H1 (cell line): ENCODE measurements at regions of chr7 and their contacts with region 1.

Region 1: DNA sequence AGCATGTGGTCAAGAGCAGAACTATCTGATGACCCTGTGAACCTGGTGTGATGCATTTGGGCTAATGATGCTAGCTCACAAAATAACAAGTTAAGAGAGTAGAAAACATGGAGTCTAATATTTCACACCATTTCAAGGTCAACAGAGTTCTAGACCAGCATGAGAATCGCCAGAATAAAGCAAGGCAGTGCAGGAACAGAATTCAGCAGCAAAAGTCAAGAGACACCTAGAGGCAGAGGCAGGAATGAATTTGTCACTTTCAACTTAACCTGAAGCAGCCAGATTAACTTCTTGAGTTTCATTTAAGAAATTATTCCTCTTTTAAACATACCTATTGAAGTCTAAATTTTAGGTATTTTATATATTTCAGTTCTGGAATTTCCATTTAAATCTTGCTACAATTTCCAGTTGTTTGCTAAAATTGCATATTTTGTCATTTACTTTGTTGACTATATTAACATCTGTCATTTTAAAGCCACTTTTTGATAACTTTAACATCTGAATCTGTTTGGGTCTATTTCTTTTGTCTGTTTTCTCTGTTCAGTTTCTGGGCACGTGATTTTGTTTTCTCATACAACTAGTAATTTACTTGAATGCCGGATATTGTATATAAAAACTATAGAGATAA is 44.2 kb upstream of the PRSS58 start:
- DNase-seq: no peak
- H3K4me3 ChIP-seq: no peak overlapping the region
- H3K27ac ChIP-seq: no peak overlapping the region
- H3K4me1 ChIP-seq: no peaks in the 10 kb centered on the region
- H3K27me3 ChIP-seq: peaks cover 0 to 9% (median 4%) of the 10 kb centered on the region in 4 experiments; a peak in 3 of 7 replicates
- CTCF ChIP-seq: peak in 2 of 3 experiments; percentile 62 to 67; a peak in 3 of 4 replicates
- EP300 ChIP-seq: no peak
- POLR2A ChIP-seq: no peak
- RAD21 ChIP-seq: peak; percentile 26 to 38; a peak in 2 of 4 replicates

Region 2: GRCh38 chr7:142231716-142232115 is 70.3 kb before region 1 on chr7:
- CTCF ChIA-PET with region 1: interaction called, 18 read pairs
- POLR2A ChIA-PET with region 1: no interaction called
- DNase-seq: peak; percentile 29 to 69
- H3K4me3 ChIP-seq: no peak overlapping the region
- H3K27ac ChIP-seq: no peak overlapping the region
- H3K4me1 ChIP-seq: peaks cover 0 to 2% (median under 1%) of the 10 kb centered on the region in 4 experiments; a peak in 1 of 7 replicates
- H3K27me3 ChIP-seq: no peaks in the 10 kb centered on the region
- CTCF ChIP-seq: peak; percentile 63 to 75 (median 68)
- EP300 ChIP-seq: no peak
- POLR2A ChIP-seq: no peak
- RAD21 ChIP-seq: peak; percentile 31 to 51; a peak in 3 of 4 replicates

Region 3: DNA sequence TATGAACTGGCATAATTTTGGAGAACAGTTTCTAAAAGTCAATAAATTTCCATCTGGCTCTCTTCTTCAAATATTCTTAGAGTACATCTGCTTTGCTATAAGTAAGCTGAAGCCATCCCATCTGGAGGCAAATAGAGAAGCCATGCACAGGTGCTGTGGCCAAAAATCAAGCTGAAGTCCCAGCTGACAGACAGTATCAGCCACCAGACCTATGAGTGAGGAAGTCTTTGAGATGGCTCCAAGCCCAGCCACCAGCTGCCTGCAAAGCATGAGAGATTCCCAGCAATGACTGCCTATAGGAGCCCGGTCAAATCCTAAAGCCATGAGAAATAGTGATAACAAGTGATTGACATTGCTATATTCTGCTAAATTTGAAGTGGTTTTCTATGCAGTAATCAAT is 22.4 kb before region 1 on chr7:
- CTCF ChIA-PET with region 1: interaction called, 22 read pairs
- POLR2A ChIA-PET with region 1: no interaction called
- DNase-seq: no peak
- H3K4me3 ChIP-seq: no peak overlapping the region
- H3K27ac ChIP-seq: no peak overlapping the region
- H3K4me1 ChIP-seq: no peaks in the 10 kb centered on the region
- H3K27me3 ChIP-seq: no peaks in the 10 kb centered on the region
- CTCF ChIP-seq: no peak
- EP300 ChIP-seq: no peak
- POLR2A ChIP-seq: no peak
- RAD21 ChIP-seq: no peak

Region 4: GRCh38 chr7:142345811-142346210 is 43.8 kb after region 1 on chr7:
- CTCF ChIA-PET with region 1: interaction called, 60 read pairs
- POLR2A ChIA-PET with region 1: no interaction called
- DNase-seq: no peak
- H3K4me3 ChIP-seq: no peak overlapping the region
- H3K27ac ChIP-seq: no peak overlapping the region
- H3K4me1 ChIP-seq: no peaks in the 10 kb centered on the region
- H3K27me3 ChIP-seq: no peaks in the 10 kb centered on the region
- CTCF ChIP-seq: no peak
- EP300 ChIP-seq: no peak
- POLR2A ChIP-seq: no peak
- RAD21 ChIP-seq: no peak

Region 5: DNA sequence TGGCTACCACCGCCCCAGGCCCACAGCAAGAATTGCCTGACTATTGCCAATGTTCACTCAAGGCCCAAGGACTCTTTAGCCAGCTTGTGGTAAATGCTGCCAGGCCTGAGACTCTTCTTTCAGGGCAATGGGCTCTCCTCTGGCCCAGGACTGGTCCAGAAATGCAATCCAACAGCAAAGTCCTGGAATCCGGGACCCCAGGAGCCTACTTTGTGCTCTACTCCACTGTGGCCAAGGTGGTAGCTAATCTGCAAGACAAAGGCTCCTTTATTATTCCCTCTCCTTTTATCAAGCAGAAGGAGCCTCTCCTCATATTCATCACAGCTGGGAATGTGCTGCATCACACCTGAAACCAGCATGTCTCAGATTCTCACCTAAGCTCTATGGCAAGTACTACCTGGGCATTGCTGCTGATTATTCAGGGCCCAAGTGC is 63.4 kb after region 1 on chr7:
- CTCF ChIA-PET with region 1: interaction called, 12 read pairs
- POLR2A ChIA-PET with region 1: no interaction called
- DNase-seq: peak in 1 of 2 experiments; percentile 80
- H3K4me3 ChIP-seq: peak overlapping the region in 3 of 4 experiments; percentile 6 to 33 (median 9); a peak in 3 of 8 replicates
- H3K27ac ChIP-seq: peak overlapping the region; percentile 66
- H3K4me1 ChIP-seq: peaks cover 8 to 17% (median 9%) of the 10 kb centered on the region in 4 experiments; a peak in 6 of 7 replicates
- H3K27me3 ChIP-seq: peaks cover 0 to 3% (median 0%) of the 10 kb centered on the region in 4 experiments; a peak in 1 of 7 replicates
- CTCF ChIP-seq: no peak
- EP300 ChIP-seq: peak; percentile 32 to 96
- POLR2A ChIP-seq: no peak
- RAD21 ChIP-seq: no peak

Region 6: GRCh38 chr7:142438235-142438922 is 136.3 kb after region 1 on chr7:
- CTCF ChIA-PET with region 1: interaction called, 11 read pairs
- POLR2A ChIA-PET with region 1: no interaction called
- DNase-seq: peak in 1 of 2 experiments; percentile 61
- H3K4me3 ChIP-seq: no peak overlapping the region
- H3K27ac ChIP-seq: no peak overlapping the region
- H3K4me1 ChIP-seq: peaks cover 0 to 10% (median 0%) of the 10 kb centered on the region in 4 experiments; a peak in 1 of 7 replicates
- H3K27me3 ChIP-seq: no peaks in the 10 kb centered on the region
- CTCF ChIP-seq: peak; percentile 95 to 99 (median 95)
- EP300 ChIP-seq: 0 out of 3 replicates have a peak, but pooled peaks of 1 of the 2 experiments have one; percentile 23
- POLR2A ChIP-seq: no peak
- RAD21 ChIP-seq: peak; percentile 70 to 83